Colonic mucosa (tissue), 4 donors: ENCODE measurements at regions of chr9 and their contacts with region 1.

Region 1: GRCh38 chr9:14466429-14466818 is 152.5 kb upstream of the NFIB start:
- DNase-seq: no peak
- H3K4me3 ChIP-seq: no peak overlapping the region
- H3K27ac ChIP-seq: no peak overlapping the region
- H3K4me1 ChIP-seq: no peaks in the 10 kb centered on the region
- H3K27me3 ChIP-seq: no peaks in the 10 kb centered on the region
- CTCF ChIP-seq: no peak

Region 2: DNA sequence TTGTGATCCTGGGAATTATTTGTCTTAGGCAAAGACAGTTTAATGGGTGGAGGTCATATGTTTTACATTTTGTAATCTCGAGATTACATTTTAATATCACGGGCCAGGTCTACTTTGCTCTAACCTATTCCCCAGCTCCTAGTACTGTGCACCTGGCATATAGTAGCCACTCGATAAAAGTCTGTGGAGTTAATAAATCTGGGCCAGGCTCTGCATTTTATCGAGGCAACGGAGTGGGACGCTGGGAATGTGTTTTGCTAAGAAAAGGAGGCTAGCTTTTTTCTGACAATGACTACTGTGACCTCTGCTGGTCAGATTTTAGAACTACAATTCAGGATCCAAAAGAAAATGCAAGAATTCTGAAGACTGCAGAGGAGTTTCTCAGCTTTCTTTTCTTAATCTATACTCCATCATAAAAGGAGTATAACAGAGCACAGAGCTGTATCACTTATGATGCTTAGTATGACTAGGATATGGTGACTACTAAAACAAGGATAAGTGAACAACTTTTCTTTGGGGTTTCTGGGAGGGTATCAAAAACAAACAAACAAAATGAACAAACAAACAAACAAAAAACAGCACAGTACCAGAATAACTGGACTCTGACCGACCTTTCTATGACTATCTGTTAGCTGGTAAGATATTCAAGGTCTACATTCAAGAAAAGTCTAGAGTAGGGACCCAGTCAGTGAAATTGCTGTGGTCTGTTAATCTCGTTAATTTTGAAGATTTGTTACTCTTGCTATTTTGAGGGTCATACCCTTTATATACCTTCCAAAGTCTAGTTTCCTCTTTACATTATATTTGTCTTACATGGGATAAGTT is 302.2 kb after region 1 on chr9:
- intact Hi-C with region 1: loop called (anchors 10 kb)
- DNase-seq: no peak
- H3K4me3 ChIP-seq: no peak overlapping the region
- H3K27ac ChIP-seq: no peak overlapping the region
- H3K4me1 ChIP-seq: no peaks in the 10 kb centered on the region
- H3K27me3 ChIP-seq: no peaks in the 10 kb centered on the region
- CTCF ChIP-seq: peak; percentile 72

Region 3: DNA sequence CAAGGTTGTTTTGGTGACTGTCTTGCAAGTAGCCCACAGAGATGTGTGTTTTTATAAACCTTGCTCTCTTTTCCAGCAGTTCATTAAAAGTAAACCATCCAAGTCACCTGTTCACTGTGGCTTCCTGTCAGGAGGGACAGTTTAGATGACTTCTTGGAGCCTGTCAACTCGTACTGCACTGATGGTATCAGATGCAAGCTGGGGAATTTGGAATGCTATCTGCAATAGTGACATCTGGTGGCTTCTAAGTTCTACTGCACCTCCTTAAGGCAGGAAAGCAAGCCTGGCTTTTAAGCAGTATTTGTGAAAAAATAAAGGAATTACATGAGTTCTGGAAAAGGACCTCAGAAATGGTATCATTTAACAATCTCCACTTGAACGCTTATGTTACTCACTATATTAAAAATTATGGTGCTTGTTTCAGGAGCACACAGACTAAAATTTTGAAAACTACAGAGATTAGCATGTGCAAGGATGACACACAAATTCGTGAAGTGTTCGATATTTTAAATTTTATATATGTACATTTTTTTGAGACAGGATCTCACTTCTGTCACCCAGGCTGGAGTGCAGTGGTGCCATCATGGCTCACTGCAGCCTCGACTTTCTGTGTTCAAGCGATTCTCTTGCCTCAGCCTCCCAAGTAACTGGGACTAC is 676.6 kb after region 1 on chr9:
- intact Hi-C with region 1: loop called (anchors 10 kb)
- DNase-seq: no peak
- H3K4me3 ChIP-seq: no peak overlapping the region
- H3K27ac ChIP-seq: no peak overlapping the region
- H3K4me1 ChIP-seq: no peaks in the 10 kb centered on the region
- H3K27me3 ChIP-seq: no peaks in the 10 kb centered on the region
- CTCF ChIP-seq: peak; percentile 77